Head of caudate nucleus (tissue), 42 donors: ENCODE measurements at regions of chr12 and their contacts with region 1.

Region 1: GRCh38 chr12:96061864-96062453 is 26.6 kb upstream of the LTA4H start:
- DNase-seq: peak; percentile 19 to 86 (median 69)

Region 2: DNA sequence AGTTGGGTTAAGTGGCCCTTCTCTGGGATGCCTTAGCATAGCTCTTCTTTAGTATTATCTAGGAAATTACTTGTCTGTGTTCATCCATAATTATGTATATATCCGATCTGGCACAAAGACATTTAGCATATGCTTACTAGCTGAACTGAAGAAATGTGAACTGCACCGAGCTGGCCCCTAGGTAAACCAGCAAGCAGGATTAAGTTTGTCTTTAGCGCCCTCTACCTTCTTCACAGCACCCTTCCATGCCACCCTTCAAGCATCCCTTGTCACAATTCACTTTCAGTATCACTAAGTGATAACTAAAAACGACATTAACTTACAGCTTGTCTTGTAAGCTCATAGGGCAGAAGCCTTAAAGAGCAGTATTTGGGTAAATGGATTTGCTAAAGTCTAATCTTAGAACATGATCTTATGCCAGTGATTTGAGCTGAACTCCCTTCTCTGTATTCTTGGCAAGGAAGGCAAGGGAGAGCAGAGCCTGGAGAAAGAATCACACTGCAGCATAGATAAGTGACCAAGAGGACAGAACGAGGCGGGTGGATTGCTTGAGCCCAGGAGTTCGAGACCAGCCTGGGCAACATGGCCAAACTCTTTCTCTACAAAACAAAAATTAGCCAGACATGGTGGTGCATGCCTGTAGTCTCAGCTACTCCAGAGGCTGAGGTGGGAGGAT is 63.2 kb before region 1 on chr12:
- intact Hi-C with region 1: no loop called
- DNase-seq: peak in 37 of 42 donors; percentile 6 to 81 (median 58)

Region 3: GRCh38 chr12:96108321-96108720 is 46.4 kb after region 1 on chr12:
- intact Hi-C with region 1: no loop called
- DNase-seq: peak in 24 of 42 donors; percentile 4 to 51 (median 20)

Region 4: GRCh38 chr12:96219698-96220206 is 157.8 kb after region 1 on chr12:
- intact Hi-C with region 1: loop called (anchors 5 kb)
- DNase-seq: peak in 19 of 42 donors; percentile 18 to 76 (median 54)